PC-3 (cell line): ENCODE measurements at regions of chr3 and their contacts with region 1.

Region 1: GRCh38 chr3:153768561-153769469 is 352.4 kb upstream of the ARHGEF26 start:
- DNase-seq: peak; percentile 78
- ATAC-seq: peak; percentile 93
- H3K4me3 ChIP-seq: no peak overlapping the region
- H3K27ac ChIP-seq: no peak overlapping the region
- H3K4me1 ChIP-seq: 0 out of 2 replicates have a peak, but pooled peaks cover 4% of the 10 kb centered on the region
- H3K27me3 ChIP-seq: no peaks in the 10 kb centered on the region
- CTCF ChIP-seq: peak; percentile 96

Region 2: GRCh38 chr3:153096611-153097202 is 672.1 kb before region 1 on chr3:
- CTCF ChIA-PET with region 1: no interaction called
- POLR2A ChIA-PET with region 1: no interaction called
- intact Hi-C with region 1: no loop called
- DNase-seq: peak; percentile 74
- ATAC-seq: peak; percentile 29; the same call in 1 of the 2 replicates
- H3K4me3 ChIP-seq: no peak overlapping the region
- H3K27ac ChIP-seq: peak overlapping the region; percentile 42
- H3K4me1 ChIP-seq: peaks cover 14% of the 10 kb centered on the region
- H3K27me3 ChIP-seq: no peaks in the 10 kb centered on the region
- CTCF ChIP-seq: no peak

Region 3: DNA sequence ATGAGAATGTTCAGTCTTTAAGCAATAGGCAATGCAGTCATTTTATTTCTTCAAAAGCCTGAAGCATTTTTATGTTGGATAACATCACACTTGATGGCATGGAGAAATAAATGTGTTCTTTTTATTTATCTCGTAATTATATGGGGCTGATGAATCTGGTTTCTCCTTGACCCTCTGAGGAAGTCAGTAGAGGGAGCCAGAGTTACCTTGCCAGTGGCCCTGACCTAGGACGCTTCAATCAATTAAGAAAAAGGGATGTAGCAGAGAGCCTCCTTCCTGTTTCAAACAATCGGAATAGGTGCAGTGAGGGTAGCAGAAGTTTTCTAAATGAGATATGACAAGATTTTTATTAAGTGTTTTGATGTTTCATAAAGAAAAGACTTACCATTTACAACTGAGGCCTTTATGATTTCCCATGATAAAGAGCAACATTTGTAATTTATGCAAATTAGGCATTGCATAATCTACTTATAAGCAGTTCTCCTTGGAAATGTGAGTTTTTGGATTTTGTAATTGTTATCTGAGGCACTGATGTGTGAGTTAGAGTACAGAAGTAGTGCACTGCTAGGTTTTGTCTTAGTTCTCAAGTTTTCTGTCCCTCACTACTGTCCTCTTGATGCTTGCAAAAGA is 477.6 kb before region 1 on chr3:
- CTCF ChIA-PET with region 1: no interaction called
- POLR2A ChIA-PET with region 1: no interaction called
- intact Hi-C with region 1: loop called (anchors 5 kb)
- DNase-seq: peak; percentile 69
- ATAC-seq: peak; percentile 80
- H3K4me3 ChIP-seq: no peak overlapping the region
- H3K27ac ChIP-seq: no peak overlapping the region
- H3K4me1 ChIP-seq: peaks cover 33% of the 10 kb centered on the region
- H3K27me3 ChIP-seq: no peaks in the 10 kb centered on the region
- CTCF ChIP-seq: peak; percentile 85

Region 4: DNA sequence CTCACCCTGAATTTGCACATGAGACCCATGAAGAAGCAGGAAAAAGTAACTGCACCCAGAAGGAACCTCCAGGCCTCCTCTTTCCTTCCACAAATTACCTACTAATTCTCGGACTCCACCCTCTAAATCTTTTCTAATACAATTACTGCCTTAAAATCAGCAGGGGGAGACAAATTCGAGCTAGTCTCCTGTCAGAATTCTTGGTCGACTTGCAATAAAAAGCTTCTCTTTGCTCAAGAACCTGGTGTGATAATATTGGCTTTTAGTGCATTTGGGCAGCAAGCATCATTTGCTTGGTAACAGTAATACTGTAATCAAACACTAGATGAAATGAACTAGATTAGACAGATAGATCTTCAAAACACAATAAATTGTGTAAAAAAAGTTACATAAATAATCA is 324.9 kb before region 1 on chr3:
- CTCF ChIA-PET with region 1: no interaction called
- POLR2A ChIA-PET with region 1: no interaction called
- intact Hi-C with region 1: loop called (anchors 2 kb)
- DNase-seq: peak; percentile 65
- ATAC-seq: no peak
- H3K4me3 ChIP-seq: no peak overlapping the region
- H3K27ac ChIP-seq: no peak overlapping the region
- H3K4me1 ChIP-seq: no peaks in the 10 kb centered on the region
- H3K27me3 ChIP-seq: no peaks in the 10 kb centered on the region
- CTCF ChIP-seq: peak; percentile 72

Region 5: DNA sequence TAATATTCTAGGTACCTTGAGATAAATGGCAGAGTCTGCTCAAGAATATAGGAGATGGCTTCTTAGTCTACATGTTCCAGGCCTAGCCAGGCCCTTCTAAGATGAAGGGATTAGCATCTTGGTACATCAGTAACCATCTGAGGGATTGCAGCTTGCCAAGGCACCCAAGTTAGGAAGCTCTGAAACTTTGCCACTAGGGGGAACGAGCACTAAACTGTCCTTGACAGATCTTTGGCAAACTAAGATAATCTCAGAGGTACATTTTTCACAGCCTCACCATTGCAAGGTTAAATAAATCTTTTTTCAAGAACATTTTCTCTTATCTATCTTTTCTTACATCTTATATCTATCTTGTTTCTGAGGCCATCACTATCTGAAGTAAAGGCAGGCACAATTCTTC is 255.6 kb before region 1 on chr3:
- CTCF ChIA-PET with region 1: no interaction called
- POLR2A ChIA-PET with region 1: no interaction called
- intact Hi-C with region 1: loop called (anchors 5 kb)
- DNase-seq: peak; percentile 58
- ATAC-seq: peak; percentile 81
- H3K4me3 ChIP-seq: no peak overlapping the region
- H3K27ac ChIP-seq: no peak overlapping the region
- H3K4me1 ChIP-seq: no peaks in the 10 kb centered on the region
- H3K27me3 ChIP-seq: no peaks in the 10 kb centered on the region
- CTCF ChIP-seq: peak; percentile 66

Region 6: DNA sequence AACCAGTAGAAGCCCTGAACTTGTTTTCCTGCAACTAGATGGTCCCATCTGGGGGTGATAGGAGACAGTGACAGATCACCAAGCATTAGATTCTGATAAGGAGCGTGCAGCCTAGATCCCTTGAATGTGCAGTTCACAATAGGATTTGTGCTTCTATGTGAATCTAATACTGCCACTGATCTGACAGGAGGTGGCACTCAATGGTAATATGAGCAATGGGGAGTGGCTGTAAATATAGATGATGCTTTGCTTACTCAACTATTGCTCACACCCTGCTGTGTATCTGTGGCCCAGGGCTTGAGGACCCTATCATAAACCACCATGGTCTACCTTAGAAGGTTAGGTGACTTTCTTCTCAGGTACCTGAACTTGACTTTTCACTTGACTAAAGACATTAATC is 64.7 kb before region 1 on chr3:
- CTCF ChIA-PET with region 1: no interaction called
- POLR2A ChIA-PET with region 1: no interaction called
- intact Hi-C with region 1: loop called (anchors 2 kb)
- DNase-seq: peak; percentile 61
- ATAC-seq: peak; percentile 80
- H3K4me3 ChIP-seq: no peak overlapping the region
- H3K27ac ChIP-seq: no peak overlapping the region
- H3K4me1 ChIP-seq: peaks cover 12% of the 10 kb centered on the region
- H3K27me3 ChIP-seq: no peaks in the 10 kb centered on the region
- CTCF ChIP-seq: peak; percentile 51